Activated B cell treated with CpG ODN at 0.5 μM for 24 hours (primary cell): ENCODE measurements at regions of chr20 and their contacts with region 1.

Region 1: GRCh38 chr20:45070932-45071632 is 29.8 kb downstream of the KCNS1 start:
- DNase-seq: no peak
- ATAC-seq: no peak
- H3K4me3 Mint-ChIP-seq: no peak overlapping the region
- H3K27ac Mint-ChIP-seq: no peak overlapping the region
- H3K4me1 Mint-ChIP-seq: peaks cover 21% of the 10 kb centered on the region
- H3K27me3 Mint-ChIP-seq: no peaks in the 10 kb centered on the region
- CTCF ChIP-seq: no peak

Region 2: DNA sequence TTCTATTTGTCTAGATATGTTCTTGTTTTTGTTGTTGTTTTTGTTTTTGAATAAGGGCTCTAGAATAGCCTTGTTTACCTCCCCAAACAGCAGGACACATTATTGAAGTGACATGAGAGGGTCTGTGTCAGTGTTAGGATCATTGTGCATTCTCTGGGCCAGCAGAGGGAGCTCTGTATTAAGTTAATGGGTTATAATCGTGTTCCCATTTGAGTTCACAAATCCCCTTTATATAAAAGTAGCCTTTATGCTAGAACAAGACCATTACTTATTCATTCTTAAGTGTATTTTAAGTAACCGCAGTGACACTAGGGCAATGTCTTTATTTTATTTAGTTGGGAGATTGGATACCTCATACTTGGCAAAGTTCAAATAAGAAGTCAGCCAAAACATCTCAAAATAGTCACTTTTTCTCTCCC is 60.0 kb before region 1 on chr20:
- CTCF ChIA-PET with region 1: no interaction called
- POLR2A ChIA-PET with region 1: no interaction called
- intact Hi-C with region 1: no loop called
- DNase-seq: no peak
- ATAC-seq: peak; percentile 57
- H3K4me3 Mint-ChIP-seq: no peak overlapping the region
- H3K27ac Mint-ChIP-seq: peak overlapping the region; percentile 33
- H3K4me1 Mint-ChIP-seq: peaks cover 19% of the 10 kb centered on the region
- H3K27me3 Mint-ChIP-seq: no peaks in the 10 kb centered on the region
- CTCF ChIP-seq: no peak

Region 3: GRCh38 chr20:45087097-45087790 is 16.2 kb after region 1 on chr20:
- CTCF ChIA-PET with region 1: no interaction called
- POLR2A ChIA-PET with region 1: no interaction called
- intact Hi-C with region 1: loop called (anchors 2 kb)
- DNase-seq: no peak
- ATAC-seq: peak; percentile 21
- H3K4me3 Mint-ChIP-seq: no peak overlapping the region
- H3K27ac Mint-ChIP-seq: no peak overlapping the region
- H3K4me1 Mint-ChIP-seq: peaks cover 23% of the 10 kb centered on the region
- H3K27me3 Mint-ChIP-seq: no peaks in the 10 kb centered on the region
- CTCF ChIP-seq: no peak